Calu3 (cell line): ENCODE measurements at regions of chr5 and their contacts with region 1.

Region 1: DNA sequence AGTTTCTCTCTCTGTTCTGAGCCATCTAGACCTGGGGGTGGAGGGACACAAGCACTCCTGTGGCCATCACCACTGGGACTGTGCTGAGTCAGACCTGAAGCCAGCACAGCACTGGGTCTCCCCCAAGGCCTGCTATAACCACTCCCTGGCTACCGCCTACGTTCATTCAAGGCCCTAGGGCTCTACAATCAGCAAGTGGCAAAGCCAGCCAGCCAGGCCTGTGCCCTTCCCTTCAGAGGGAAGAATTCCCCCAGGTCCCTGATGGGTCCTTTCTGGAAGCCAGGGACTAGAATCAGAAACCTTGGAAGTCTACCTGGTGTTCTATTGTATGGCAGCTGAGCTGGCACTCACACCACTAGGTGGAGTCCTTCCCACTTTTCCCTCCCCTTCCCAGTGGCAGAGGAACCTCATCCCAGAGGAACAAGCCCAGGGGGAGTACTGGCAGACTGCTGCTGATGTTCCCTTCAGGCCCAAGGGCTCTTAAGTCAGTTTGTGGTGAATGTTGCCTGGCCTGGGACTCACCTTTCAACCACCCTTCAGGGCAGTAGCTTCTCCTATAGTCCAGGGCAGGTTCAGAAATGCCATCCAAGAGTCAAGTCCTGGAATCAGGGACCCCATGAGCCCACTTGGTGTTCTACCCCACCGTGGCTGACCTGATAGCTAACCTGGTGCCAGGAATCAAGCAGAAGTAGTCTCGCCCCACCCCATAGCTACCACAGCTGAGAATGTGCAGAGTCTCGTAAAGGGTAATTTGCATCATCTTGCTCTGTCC is 20.0 kb downstream of the JMY start:
- DNase-seq: peak; percentile 74
- H3K4me3 Mint-ChIP-seq: no peak overlapping the region
- H3K27ac Mint-ChIP-seq: no peak overlapping the region
- H3K4me1 Mint-ChIP-seq: peaks cover 18% of the 10 kb centered on the region
- H3K27me3 Mint-ChIP-seq: no peaks in the 10 kb centered on the region
- CTCF ChIP-seq: peak; percentile 83

Region 2: DNA sequence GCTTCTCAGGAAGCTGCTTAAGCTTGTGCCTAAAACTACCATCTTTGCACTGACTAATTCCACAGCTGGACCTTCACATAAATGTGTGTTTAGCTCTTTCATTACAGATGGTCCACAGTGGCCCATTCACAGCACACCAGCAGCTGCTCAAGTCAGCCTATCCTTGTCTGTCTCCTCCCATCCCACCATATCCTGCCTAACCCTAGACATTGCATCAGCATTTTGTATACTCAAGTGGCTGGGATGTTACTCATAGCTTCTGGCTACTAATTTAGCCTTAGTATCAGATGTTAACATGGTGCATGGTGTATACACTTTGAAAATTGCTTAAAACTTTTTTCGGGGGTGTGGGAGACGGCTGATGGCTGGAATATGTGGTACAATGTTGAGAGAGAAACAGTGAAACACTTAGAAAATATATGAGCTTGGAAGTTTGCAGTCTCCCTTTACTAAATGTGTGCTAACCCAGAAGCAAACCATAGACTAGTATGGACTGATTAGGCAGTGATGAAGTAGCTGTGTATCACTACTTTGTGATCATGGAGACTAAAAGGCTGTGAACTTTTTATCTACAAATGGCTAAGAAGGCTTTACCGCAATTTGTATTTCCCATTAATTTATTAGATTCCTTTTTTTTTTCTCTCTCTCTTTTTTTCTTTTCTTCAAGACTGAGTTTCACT is 63.1 kb after region 1 on chr5:
- CTCF ChIA-PET with region 1: interaction called, 4 read pairs
- intact Hi-C with region 1: loop called (anchors 2 kb)
- DNase-seq: peak; percentile 19
- H3K4me3 Mint-ChIP-seq: no peak overlapping the region
- H3K27ac Mint-ChIP-seq: peak overlapping the region; percentile 65
- H3K4me1 Mint-ChIP-seq: peaks cover 11% of the 10 kb centered on the region
- H3K27me3 Mint-ChIP-seq: no peaks in the 10 kb centered on the region
- CTCF ChIP-seq: no peak

Region 3: GRCh38 chr5:79464695-79465332 is 208.8 kb after region 1 on chr5:
- CTCF ChIA-PET with region 1: interaction called, 3 read pairs
- intact Hi-C with region 1: loop called (anchors 1 kb)
- DNase-seq: no peak
- H3K4me3 Mint-ChIP-seq: no peak overlapping the region
- H3K27ac Mint-ChIP-seq: no peak overlapping the region
- H3K4me1 Mint-ChIP-seq: no peaks in the 10 kb centered on the region
- H3K27me3 Mint-ChIP-seq: no peaks in the 10 kb centered on the region
- CTCF ChIP-seq: peak; percentile 68